ENCODE measurements at regions of chr11 and their contacts with region 1.

Region 1: GRCh38 chr11:102346748-102347461 is at the start of gene BIRC2:
- DNase-seq: peak; percentile 96 to 97
- ATAC-seq: peak; percentile 97 to 98 (median 97)
- H3K4me3 ChIP-seq: peak within 1 kb of the TSS; percentile 80
- H3K27ac ChIP-seq: peak within 1 kb of the TSS; percentile 95
- H3K4me1 ChIP-seq: peaks cover 8% of the 10 kb centered on the region
- H3K27me3 ChIP-seq: no peaks in the 10 kb centered on the region
- CTCF ChIP-seq: peak; percentile 75
- total RNA-seq, gene BIRC2: 26.6 to 30.3 (median 29.6) TPM

Region 2: DNA sequence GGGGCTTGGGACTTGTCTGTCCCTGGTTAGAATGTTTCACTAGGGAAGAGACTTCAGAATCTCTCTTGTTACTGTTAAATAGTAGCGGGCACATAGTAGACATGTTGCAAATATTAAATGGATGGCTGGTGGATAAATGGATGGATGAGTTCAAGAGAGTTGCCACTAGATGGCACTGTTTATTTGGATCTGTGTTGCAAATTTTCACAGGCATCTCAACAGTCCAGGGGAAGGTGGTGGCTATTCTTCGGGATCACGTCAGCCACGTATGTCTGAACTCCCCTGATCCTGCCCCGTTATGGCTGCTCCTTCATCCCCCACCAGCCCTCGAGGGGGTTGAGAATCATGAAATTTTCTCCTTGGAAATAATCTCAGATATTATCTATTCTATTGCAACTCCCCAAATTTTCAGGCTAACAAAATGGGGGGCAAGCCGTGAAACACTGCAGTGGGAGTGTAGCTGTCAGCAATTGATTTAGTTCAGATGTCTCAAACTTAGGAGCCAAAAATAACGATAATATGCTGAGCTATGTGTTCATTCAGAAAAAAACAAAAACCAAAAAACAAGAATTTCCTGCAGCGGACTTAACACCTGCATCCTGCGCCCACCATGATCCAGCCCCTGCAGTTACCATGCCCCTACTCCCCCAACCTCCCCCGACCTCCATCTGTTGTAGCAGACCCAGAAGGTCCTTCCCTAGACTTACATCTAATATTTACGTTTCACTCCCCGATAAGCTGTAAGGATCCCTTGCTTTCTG is 58.8 kb before region 1 on chr11:
- intact Hi-C with region 1: loop called in 1 of 2 experiments (anchors 2 kb)
- DNase-seq: no peak
- ATAC-seq: peak; percentile 88 to 95 (median 90)
- H3K4me3 ChIP-seq: peak overlapping the region; percentile 21
- H3K27ac ChIP-seq: no peak overlapping the region
- H3K4me1 ChIP-seq: no peaks in the 10 kb centered on the region
- H3K27me3 ChIP-seq: no peaks in the 10 kb centered on the region
- CTCF ChIP-seq: peak; percentile 71

Region 3: GRCh38 chr11:102306048-102306585 is 40.8 kb before region 1 on chr11:
- intact Hi-C with region 1: no loop called
- DNase-seq: no peak
- ATAC-seq: no peak
- H3K4me3 ChIP-seq: no peak overlapping the region
- H3K27ac ChIP-seq: no peak overlapping the region
- H3K4me1 ChIP-seq: no peaks in the 10 kb centered on the region
- H3K27me3 ChIP-seq: peaks cover 0 to 3% (median 0%) of the 10 kb centered on the region in 3 donors
- CTCF ChIP-seq: no peak

Region 4: DNA sequence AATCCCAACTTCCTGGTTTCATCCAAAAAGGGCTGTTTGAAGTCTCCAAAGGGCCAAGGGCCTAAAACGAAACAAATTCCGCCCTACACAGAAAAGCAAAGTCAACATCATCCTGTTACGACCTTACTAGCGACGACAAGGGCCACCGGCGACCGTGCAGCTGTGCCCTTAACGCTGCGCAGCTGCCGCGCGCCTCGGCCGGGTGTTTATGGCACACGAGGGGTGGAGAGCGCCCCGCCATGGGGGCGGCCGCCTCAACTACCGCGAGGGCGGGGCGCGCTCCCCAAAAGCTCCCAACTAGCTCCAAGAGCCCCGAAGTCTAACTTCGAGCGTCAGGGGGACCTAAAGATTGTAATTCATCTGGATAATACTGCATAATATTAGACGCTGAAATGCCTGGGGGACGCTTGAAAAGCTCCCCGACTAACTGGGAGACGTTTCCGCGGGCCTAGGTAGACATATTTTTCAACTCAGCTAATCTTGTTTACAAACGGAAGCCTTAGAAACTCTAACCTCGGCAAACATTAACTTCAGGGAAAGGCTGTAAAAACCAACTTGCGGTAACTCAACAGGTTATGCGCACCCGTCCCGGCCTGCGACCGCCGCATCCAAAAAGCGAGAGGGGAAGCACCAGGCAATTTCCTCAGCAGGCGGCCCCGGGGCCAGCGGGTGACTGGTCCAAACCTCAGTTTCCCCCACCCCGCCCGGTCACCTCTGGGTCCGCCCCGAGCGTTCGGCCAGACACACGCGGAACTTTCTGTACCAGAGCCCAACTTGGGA is 105.0 kb after region 1 on chr11:
- intact Hi-C with region 1: loop called (anchors 2 to 5 kb)
- DNase-seq: peak; percentile 59 to 82
- ATAC-seq: peak; percentile 77 to 89 (median 86)
- H3K4me3 ChIP-seq: peak overlapping the region; percentile 94
- H3K27ac ChIP-seq: peak overlapping the region; percentile 83
- H3K4me1 ChIP-seq: peaks cover 8% of the 10 kb centered on the region
- H3K27me3 ChIP-seq: no peaks in the 10 kb centered on the region
- CTCF ChIP-seq: no peak

Region 5: GRCh38 chr11:102469172-102469821 is 122.4 kb after region 1 on chr11:
- intact Hi-C with region 1: no loop called
- DNase-seq: no peak
- ATAC-seq: no peak
- H3K4me3 ChIP-seq: no peak overlapping the region
- H3K27ac ChIP-seq: no peak overlapping the region
- H3K4me1 ChIP-seq: no peaks in the 10 kb centered on the region
- H3K27me3 ChIP-seq: no peaks in the 10 kb centered on the region
- CTCF ChIP-seq: no peak

Region 6: GRCh38 chr11:102495161-102496042 is 148.5 kb after region 1 on chr11:
- intact Hi-C with region 1: loop called (anchors 2 to 10 kb)
- DNase-seq: no peak
- ATAC-seq: peak; percentile 55 to 92 (median 74)
- H3K4me3 ChIP-seq: no peak overlapping the region
- H3K27ac ChIP-seq: no peak overlapping the region
- H3K4me1 ChIP-seq: no peaks in the 10 kb centered on the region
- H3K27me3 ChIP-seq: peaks cover 0 to 6% (median 0%) of the 10 kb centered on the region in 3 donors
- CTCF ChIP-seq: peak; percentile 79

Region 7: DNA sequence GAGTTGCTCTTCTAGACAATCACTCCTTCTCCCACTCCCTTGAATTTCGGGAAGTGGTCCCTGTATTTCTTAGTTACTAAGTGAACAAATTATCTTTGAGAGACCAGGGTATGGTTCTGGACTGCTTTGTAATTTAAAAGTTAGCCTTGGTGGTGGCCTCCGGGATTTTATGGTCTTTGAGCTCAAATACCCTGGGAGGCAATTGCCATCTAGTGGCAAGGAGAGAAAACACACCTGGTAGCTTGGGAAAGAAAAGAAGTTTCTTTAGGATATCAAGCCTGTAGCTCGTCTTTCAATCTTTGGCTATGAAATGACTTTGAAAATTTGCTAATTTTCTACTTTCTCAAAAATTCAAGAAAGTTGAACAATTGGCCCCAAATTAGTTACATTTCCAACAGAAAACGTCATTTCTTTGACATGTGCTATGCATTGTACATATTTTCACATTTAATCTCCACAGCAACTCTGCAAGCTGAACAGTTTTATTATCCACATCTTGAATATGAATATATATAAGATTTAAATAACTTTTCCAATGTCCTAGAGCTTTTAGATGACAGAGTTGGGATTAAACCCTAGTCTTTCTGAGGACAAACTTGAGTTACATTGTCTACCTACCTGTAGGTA is 319.5 kb after region 1 on chr11:
- intact Hi-C with region 1: loop called in 1 of 2 experiments (anchors 10 kb)
- DNase-seq: no peak
- ATAC-seq: no peak
- H3K4me3 ChIP-seq: no peak overlapping the region
- H3K27ac ChIP-seq: no peak overlapping the region
- H3K4me1 ChIP-seq: no peaks in the 10 kb centered on the region
- H3K27me3 ChIP-seq: peaks cover 0 to 4% (median 0%) of the 10 kb centered on the region in 3 donors
- CTCF ChIP-seq: peak; percentile 60

Measured in psoas muscle (tissue), 8 donors.